Endothelial cell of umbilical vein (primary cell): ENCODE measurements at regions of chr3 and their contacts with region 1.

Region 1: GRCh38 chr3:149717391-149718056 is 34.8 kb downstream of the COMMD2 start:
- DNase-seq: peak; percentile 87
- H3K4me3 ChIP-seq: no peak overlapping the region
- H3K27ac ChIP-seq: no peak overlapping the region
- H3K4me1 ChIP-seq: peaks cover 15% of the 10 kb centered on the region
- H3K27me3 ChIP-seq: no peaks in the 10 kb centered on the region
- CTCF ChIP-seq: peak; percentile 54 to 58
- POLR2A ChIP-seq: no peak

Region 2: GRCh38 chr3:149512209-149512782 is 205.2 kb before region 1 on chr3:
- CTCF ChIA-PET with region 1: interaction called, 15 read pairs
- POLR2A ChIA-PET with region 1: no interaction called
- dilution Hi-C with region 1: no loop called
- intact Hi-C with region 1: loop called (anchors 1 kb)
- DNase-seq: peak; percentile 77
- H3K4me3 ChIP-seq: no peak overlapping the region
- H3K27ac ChIP-seq: no peak overlapping the region
- H3K4me1 ChIP-seq: peaks cover 18% of the 10 kb centered on the region
- H3K27me3 ChIP-seq: no peaks in the 10 kb centered on the region
- CTCF ChIP-seq: peak; percentile 66 to 71
- POLR2A ChIP-seq: no peak

Region 3: DNA sequence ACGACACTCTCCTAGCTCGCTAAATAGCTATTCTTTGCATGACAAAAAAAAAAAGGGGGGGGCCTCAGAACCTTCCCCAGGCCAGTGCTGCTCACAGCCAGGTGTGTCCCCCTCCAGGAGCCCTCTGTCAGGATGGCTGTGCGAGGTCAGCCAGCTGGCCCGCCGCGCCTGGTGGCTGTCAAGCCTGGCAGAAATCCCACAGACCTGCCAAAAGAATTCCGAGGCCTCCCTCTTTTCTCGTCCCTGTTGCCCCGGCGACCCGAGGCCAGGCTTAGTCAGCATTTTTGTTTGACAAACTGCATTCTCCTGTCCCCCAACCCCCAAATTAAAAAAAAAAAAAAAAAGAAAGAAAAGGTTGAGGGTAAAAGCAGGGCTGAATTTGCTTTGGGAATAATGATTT is 181.1 kb before region 1 on chr3:
- CTCF ChIA-PET with region 1: interaction called, 16 read pairs
- POLR2A ChIA-PET with region 1: no interaction called
- dilution Hi-C with region 1: no loop called
- intact Hi-C with region 1: no loop called
- DNase-seq: no peak
- H3K4me3 ChIP-seq: no peak overlapping the region
- H3K27ac ChIP-seq: peak overlapping the region; percentile 20
- H3K4me1 ChIP-seq: peaks cover 79% of the 10 kb centered on the region
- H3K27me3 ChIP-seq: no peaks in the 10 kb centered on the region
- CTCF ChIP-seq: no peak
- POLR2A ChIP-seq: no peak

Region 4: GRCh38 chr3:149621218-149622005 is 96.1 kb before region 1 on chr3:
- CTCF ChIA-PET with region 1: interaction called, 3 read pairs
- POLR2A ChIA-PET with region 1: no interaction called
- dilution Hi-C with region 1: no loop called
- intact Hi-C with region 1: loop called (anchors 1 kb)
- DNase-seq: peak; percentile 90
- H3K4me3 ChIP-seq: peak overlapping the region in 1 of 3 experiments; percentile 13
- H3K27ac ChIP-seq: peak overlapping the region; percentile 99
- H3K4me1 ChIP-seq: peaks cover 75% of the 10 kb centered on the region
- H3K27me3 ChIP-seq: no peaks in the 10 kb centered on the region
- CTCF ChIP-seq: no peak
- POLR2A ChIP-seq: peak; percentile 47

Region 5: GRCh38 chr3:149752051-149752787 is 34.7 kb after region 1 on chr3 and contains the start of gene COMMD2:
- CTCF ChIA-PET with region 1: interaction called, 13 read pairs
- POLR2A ChIA-PET with region 1: no interaction called
- dilution Hi-C with region 1: no loop called
- intact Hi-C with region 1: no loop called
- DNase-seq: peak; percentile 83
- H3K4me3 ChIP-seq: peak within 1 kb of the TSS; percentile 74 to 94 (median 91)
- H3K27ac ChIP-seq: peak within 1 kb of the TSS; percentile 33
- H3K4me1 ChIP-seq: peaks cover 15% of the 10 kb centered on the region
- H3K27me3 ChIP-seq: no peaks in the 10 kb centered on the region
- CTCF ChIP-seq: peak in 1 of 2 donors; percentile 17
- POLR2A ChIP-seq: peak; percentile 86
- total RNA-seq, gene COMMD2: 42.9 and 51.0 TPM in 2 replicates